Gastrocnemius medialis (tissue), 4 donors: ENCODE measurements at regions of chr6 and their contacts with region 1.

Region 1: DNA sequence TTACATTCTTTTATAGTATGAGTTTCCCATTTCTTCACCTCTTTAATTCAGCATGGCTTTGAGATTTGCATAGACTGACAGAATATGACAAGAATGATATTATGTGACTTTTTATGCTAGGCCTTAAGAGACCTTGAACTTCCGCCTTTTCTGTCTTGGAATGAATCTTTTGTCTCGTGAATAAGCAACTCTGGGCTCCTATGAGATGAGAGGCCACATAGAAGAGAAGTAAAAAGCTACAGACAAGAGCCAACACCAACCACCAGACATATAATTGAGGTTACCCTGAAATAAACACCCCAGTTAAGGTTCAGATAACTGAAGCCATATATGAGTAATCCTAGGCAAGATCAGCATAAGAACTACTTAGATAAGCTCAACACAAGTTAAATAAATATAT is 600.8 kb downstream of the MEI4 start:
- DNase-seq: no peak
- ATAC-seq: no peak
- H3K4me3 ChIP-seq: no peak overlapping the region
- H3K27ac ChIP-seq: no peak overlapping the region
- H3K4me1 ChIP-seq: no peaks in the 10 kb centered on the region
- H3K27me3 ChIP-seq: no peaks in the 10 kb centered on the region
- CTCF ChIP-seq: no peak
- POLR2A ChIP-seq: no peak

Region 2: DNA sequence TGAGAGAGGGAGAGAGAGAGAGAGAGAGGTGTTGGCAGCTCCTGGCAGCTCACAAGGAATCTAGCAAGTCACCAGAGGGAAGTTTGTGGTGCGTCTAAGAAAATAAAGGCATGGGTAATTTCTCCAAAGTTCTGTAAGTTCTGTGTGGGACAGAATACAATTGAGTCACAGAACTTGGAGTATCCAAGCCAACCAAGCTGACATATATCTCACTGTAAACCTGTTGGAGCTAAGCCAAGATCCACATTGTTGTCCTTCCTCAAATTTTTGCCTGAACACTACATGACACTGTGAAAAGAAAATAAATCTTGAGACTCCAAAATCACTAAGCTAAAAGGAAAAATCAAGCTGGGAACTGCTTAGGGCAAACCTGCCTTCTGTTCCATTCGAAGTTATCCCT is 164.1 kb before region 1 on chr6:
- in situ Hi-C with region 1: no loop called
- intact Hi-C with region 1: no loop called
- DNase-seq: no peak
- ATAC-seq: no peak
- H3K4me3 ChIP-seq: no peak overlapping the region
- H3K27ac ChIP-seq: no peak overlapping the region
- H3K4me1 ChIP-seq: no peaks in the 10 kb centered on the region
- H3K27me3 ChIP-seq: no peaks in the 10 kb centered on the region
- CTCF ChIP-seq: no peak
- POLR2A ChIP-seq: no peak

Region 3: DNA sequence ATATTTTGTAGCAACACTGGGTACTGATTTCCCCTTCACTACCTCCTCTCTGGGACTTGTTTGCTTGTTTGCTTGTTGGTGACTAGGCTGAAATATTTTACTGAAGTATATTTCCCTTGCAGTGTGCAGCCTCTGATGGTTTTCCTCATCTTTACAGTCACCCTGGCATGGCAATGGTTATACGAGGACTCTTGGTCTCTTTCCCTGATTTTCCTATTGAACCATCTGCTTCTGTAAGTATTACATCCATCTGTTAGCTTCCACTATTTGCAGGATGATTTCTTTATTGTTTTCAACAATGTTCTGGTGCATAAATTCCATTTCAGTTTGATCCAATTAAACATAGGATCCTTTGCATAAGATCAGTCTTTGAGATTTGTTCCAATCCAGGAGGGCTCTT is 135.7 kb before region 1 on chr6:
- in situ Hi-C with region 1: no loop called
- intact Hi-C with region 1: no loop called
- DNase-seq: no peak
- ATAC-seq: no peak
- H3K4me3 ChIP-seq: no peak overlapping the region
- H3K27ac ChIP-seq: no peak overlapping the region
- H3K4me1 ChIP-seq: no peaks in the 10 kb centered on the region
- H3K27me3 ChIP-seq: no peaks in the 10 kb centered on the region
- CTCF ChIP-seq: no peak
- POLR2A ChIP-seq: no peak

Region 4: GRCh38 chr6:78153976-78154375 is 99.6 kb before region 1 on chr6:
- in situ Hi-C with region 1: no loop called
- intact Hi-C with region 1: no loop called
- DNase-seq: no peak
- ATAC-seq: no peak
- H3K4me3 ChIP-seq: no peak overlapping the region
- H3K27ac ChIP-seq: no peak overlapping the region
- H3K4me1 ChIP-seq: no peaks in the 10 kb centered on the region
- H3K27me3 ChIP-seq: no peaks in the 10 kb centered on the region
- CTCF ChIP-seq: no peak
- POLR2A ChIP-seq: no peak

Region 5: GRCh38 chr6:78324213-78324612 is 70.6 kb after region 1 on chr6:
- in situ Hi-C with region 1: no loop called
- intact Hi-C with region 1: loop called (anchors 2 kb)
- DNase-seq: no peak
- ATAC-seq: no peak
- H3K4me3 ChIP-seq: no peak overlapping the region
- H3K27ac ChIP-seq: no peak overlapping the region
- H3K4me1 ChIP-seq: no peaks in the 10 kb centered on the region
- H3K27me3 ChIP-seq: no peaks in the 10 kb centered on the region
- CTCF ChIP-seq: no peak
- POLR2A ChIP-seq: no peak

Region 6: DNA sequence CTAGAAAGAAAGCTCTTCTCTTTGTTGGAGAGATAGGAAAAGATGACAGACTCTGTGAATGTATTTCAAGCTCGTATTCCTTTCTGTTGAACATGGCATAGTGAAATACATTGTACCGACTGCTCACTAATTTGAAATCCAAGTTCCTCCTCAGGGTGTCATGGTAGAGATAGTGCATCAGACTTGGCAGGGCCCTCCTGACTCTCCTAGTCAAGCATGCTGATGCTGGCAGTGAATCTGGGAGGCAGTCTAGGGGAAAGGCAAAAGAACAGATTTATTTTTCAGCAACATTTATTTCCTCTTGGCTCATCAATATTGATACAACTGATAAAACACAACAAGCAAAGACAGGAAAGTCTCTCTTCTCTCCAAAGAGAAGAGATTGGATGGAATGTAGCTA is 257.4 kb after region 1 on chr6:
- in situ Hi-C with region 1: no loop called
- intact Hi-C with region 1: no loop called
- DNase-seq: no peak
- ATAC-seq: no peak
- H3K4me3 ChIP-seq: no peak overlapping the region
- H3K27ac ChIP-seq: no peak overlapping the region
- H3K4me1 ChIP-seq: no peaks in the 10 kb centered on the region
- H3K27me3 ChIP-seq: no peaks in the 10 kb centered on the region
- CTCF ChIP-seq: no peak
- POLR2A ChIP-seq: no peak